ENCODE measurements at regions of chr14 and their contacts with region 1.

Region 1: GRCh38 chr14:20682435-20683124 is 1.8 kb upstream of the RNASE4 start:
- DNase-seq: peak; percentile 83 to 85
- ATAC-seq: peak; percentile 77 to 84
- H3K4me3 ChIP-seq: peak overlapping the region; percentile 69 to 98 (median 87)
- H3K27ac ChIP-seq: peak overlapping the region; percentile 95 to 100 (median 97)
- H3K4me1 ChIP-seq: peaks cover 11 to 20% of the 10 kb centered on the region in 2 donors
- H3K27me3 ChIP-seq: no peaks in the 10 kb centered on the region
- CTCF ChIP-seq: no peak
- POLR2A ChIP-seq: peak; percentile 93 to 94

Region 2: GRCh38 chr14:20413045-20413799 is 269.4 kb before region 1 on chr14 and contains the start of gene TEP1:
- in situ Hi-C with region 1: no loop called
- intact Hi-C with region 1: loop called (anchors 2 kb)
- DNase-seq: peak; percentile 83 to 88
- ATAC-seq: peak; percentile 89 to 93
- H3K4me3 ChIP-seq: peak within 1 kb of the TSS; percentile 79 to 91 (median 85)
- H3K27ac ChIP-seq: peak within 1 kb of the TSS; percentile 94 to 97 (median 96)
- H3K4me1 ChIP-seq: peaks cover 25 to 32% of the 10 kb centered on the region in 2 donors
- H3K27me3 ChIP-seq: no peaks in the 10 kb centered on the region
- CTCF ChIP-seq: no peak
- POLR2A ChIP-seq: peak; percentile 75 to 83
- total RNA-seq, gene TEP1: 7.2 to 25.7 (median 12.0) TPM

Region 3: GRCh38 chr14:20613094-20614037 is 69.2 kb before region 1 on chr14:
- in situ Hi-C with region 1: no loop called
- intact Hi-C with region 1: loop called (anchors 1 kb)
- DNase-seq: peak; percentile 62 to 76
- ATAC-seq: peak; percentile 79 to 82
- H3K4me3 ChIP-seq: peak overlapping the region; percentile 56 to 66 (median 58)
- H3K27ac ChIP-seq: peak overlapping the region; percentile 44 to 73 (median 68)
- H3K4me1 ChIP-seq: peaks cover 9 to 17% of the 10 kb centered on the region in 2 donors
- H3K27me3 ChIP-seq: no peaks in the 10 kb centered on the region
- CTCF ChIP-seq: peak; percentile 72 to 93 (median 83)
- POLR2A ChIP-seq: no peak

Region 4: GRCh38 chr14:21039585-21040369 is 357.2 kb after region 1 on chr14:
- in situ Hi-C with region 1: no loop called
- intact Hi-C with region 1: loop called (anchors 5 kb)
- DNase-seq: peak in 1 of 2 donors; percentile 72
- ATAC-seq: peak; percentile 53 to 68
- H3K4me3 ChIP-seq: peak overlapping the region in 2 of 4 donors; percentile 19 to 26
- H3K27ac ChIP-seq: peak overlapping the region; percentile 83 to 91 (median 86)
- H3K4me1 ChIP-seq: peaks cover 62 to 75% of the 10 kb centered on the region in 2 donors
- H3K27me3 ChIP-seq: no peaks in the 10 kb centered on the region
- CTCF ChIP-seq: peak; percentile 77 to 84 (median 79)
- POLR2A ChIP-seq: peak in 1 of 2 donors; percentile 1

Region 5: GRCh38 chr14:21103710-21104447 is 421.3 kb after region 1 on chr14:
- in situ Hi-C with region 1: loop called in 2 of 4 experiments (anchors 25 kb)
- intact Hi-C with region 1: loop called (anchors 5 kb)
- DNase-seq: peak; percentile 95
- ATAC-seq: peak; percentile 87 to 92
- H3K4me3 ChIP-seq: peak overlapping the region; percentile 74 to 86 (median 82)
- H3K27ac ChIP-seq: peak overlapping the region; percentile 97 to 99 (median 98)
- H3K4me1 ChIP-seq: peaks cover 40 to 41% of the 10 kb centered on the region in 2 donors
- H3K27me3 ChIP-seq: no peaks in the 10 kb centered on the region
- CTCF ChIP-seq: peak; percentile 77 to 87 (median 84)
- POLR2A ChIP-seq: peak; percentile 88 to 92

Region 6: GRCh38 chr14:22589096-22589839 is 1906.7 kb after region 1 on chr14 and contains the start of gene DAD1:
- in situ Hi-C with region 1: no loop called
- intact Hi-C with region 1: loop called (anchors 5 kb)
- DNase-seq: peak; percentile 97 to 98
- ATAC-seq: peak; percentile 100
- H3K4me3 ChIP-seq: peak within 1 kb of the TSS; percentile 70 to 95 (median 83)
- H3K27ac ChIP-seq: peak within 1 kb of the TSS; percentile 82 to 92 (median 87)
- H3K4me1 ChIP-seq: peaks cover 27 to 35% of the 10 kb centered on the region in 2 donors
- H3K27me3 ChIP-seq: no peaks in the 10 kb centered on the region
- CTCF ChIP-seq: peak in 1 of 5 experiments; percentile 27
- POLR2A ChIP-seq: peak; percentile 78 to 84
- total RNA-seq, gene DAD1: 155 to 257 (median 209) TPM